ENCODE measurements at regions of chr9 and their contacts with region 1.

Region 1: DNA sequence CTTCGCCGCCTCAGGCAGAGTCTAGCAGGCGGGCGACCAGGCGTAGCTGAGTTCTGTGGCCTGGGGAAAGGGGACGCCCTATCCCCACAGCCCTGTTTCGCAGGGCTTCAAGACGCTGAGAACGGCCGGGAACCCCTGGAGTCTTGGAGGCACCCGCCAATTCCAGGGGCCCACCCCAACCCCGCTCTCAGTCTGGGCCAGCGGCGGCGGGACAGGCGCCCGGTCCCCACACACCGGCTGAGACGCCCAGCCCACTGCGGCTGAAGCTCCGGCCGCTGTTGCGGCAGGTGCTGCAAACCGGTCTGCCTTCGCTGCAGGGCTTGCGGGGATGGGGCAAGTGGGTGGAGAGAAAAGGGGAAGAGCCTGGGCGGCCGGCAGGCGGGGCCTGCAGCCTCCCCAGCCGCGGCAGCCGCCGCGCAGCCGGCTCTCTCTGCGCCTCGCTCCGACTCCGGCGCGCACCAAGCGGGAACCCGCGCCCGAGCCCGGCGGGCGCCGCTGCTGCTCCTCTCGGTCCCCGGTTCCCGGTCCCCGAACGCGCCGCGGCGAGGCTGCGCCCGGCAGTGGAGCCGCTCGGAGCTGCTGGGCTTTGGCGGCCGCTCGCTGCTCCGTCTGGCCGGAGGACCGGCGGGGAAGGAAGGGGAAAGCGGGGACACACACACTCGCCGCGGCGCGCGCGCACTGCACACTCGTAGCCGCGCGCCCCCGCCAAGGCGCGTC is at the start of gene PIP5K1B:
- DNase-seq: peak; percentile 83 to 87
- ATAC-seq: peak; percentile 87
- H3K4me3 ChIP-seq: peak within 1 kb of the TSS; percentile 61 to 81
- H3K27ac ChIP-seq: peak within 1 kb of the TSS in 1 of 2 donors; percentile 35
- H3K4me1 ChIP-seq: no peaks in the 10 kb centered on the region
- H3K27me3 ChIP-seq: no peaks in the 10 kb centered on the region
- total RNA-seq, gene PIP5K1B: 8.2 to 8.8 TPM

Region 2: DNA sequence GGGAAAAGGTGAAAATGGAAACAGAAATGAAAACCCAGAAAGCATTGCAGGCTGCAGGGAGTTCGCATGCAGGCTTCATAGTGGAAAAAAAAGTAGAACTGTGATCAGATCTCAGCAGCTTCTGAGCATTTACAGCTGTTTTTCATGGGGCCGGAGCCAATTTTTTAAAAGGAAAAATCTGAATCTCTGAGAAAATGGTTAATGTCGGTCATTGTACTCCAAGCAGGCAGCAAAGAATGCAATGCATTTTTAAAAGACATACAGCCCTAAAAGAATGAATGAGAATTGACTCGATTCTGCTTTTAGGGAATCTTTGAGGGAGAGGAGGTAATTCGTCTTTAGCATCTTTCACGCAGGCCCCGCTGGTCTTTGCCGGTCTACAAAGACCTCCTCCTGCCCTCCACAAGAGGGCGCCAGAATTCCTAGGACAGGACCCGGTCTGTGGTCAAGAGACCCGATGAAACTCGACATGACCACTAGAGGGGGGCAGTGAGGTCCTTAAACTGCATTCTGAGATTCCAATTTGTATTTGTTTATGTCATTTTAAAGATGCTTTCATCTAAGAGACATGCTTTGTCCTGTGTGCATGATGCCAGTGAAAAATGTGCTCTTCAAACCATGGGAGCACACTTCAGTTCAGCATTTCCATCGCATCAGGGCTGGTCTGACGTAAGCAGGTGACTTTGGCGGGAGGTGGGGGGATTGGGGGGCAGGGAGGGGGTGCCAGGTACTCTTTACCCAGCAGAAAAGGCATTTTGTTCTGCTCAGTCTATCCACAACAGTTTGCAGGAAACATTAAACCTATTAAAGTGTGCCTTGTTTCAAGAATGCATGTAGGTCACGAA is 120.6 kb before region 1 on chr9:
- intact Hi-C with region 1: loop called (anchors 10 kb)
- DNase-seq: peak; percentile 87 to 89
- ATAC-seq: peak; percentile 95
- H3K4me3 ChIP-seq: no peak overlapping the region
- H3K27ac ChIP-seq: no peak overlapping the region
- H3K4me1 ChIP-seq: no peaks in the 10 kb centered on the region
- H3K27me3 ChIP-seq: no peaks in the 10 kb centered on the region

Region 3: GRCh38 chr9:68653141-68653595 is 51.8 kb before region 1 on chr9:
- intact Hi-C with region 1: no loop called
- DNase-seq: no peak
- ATAC-seq: no peak
- H3K4me3 ChIP-seq: no peak overlapping the region
- H3K27ac ChIP-seq: no peak overlapping the region
- H3K4me1 ChIP-seq: no peaks in the 10 kb centered on the region
- H3K27me3 ChIP-seq: no peaks in the 10 kb centered on the region

Region 4: DNA sequence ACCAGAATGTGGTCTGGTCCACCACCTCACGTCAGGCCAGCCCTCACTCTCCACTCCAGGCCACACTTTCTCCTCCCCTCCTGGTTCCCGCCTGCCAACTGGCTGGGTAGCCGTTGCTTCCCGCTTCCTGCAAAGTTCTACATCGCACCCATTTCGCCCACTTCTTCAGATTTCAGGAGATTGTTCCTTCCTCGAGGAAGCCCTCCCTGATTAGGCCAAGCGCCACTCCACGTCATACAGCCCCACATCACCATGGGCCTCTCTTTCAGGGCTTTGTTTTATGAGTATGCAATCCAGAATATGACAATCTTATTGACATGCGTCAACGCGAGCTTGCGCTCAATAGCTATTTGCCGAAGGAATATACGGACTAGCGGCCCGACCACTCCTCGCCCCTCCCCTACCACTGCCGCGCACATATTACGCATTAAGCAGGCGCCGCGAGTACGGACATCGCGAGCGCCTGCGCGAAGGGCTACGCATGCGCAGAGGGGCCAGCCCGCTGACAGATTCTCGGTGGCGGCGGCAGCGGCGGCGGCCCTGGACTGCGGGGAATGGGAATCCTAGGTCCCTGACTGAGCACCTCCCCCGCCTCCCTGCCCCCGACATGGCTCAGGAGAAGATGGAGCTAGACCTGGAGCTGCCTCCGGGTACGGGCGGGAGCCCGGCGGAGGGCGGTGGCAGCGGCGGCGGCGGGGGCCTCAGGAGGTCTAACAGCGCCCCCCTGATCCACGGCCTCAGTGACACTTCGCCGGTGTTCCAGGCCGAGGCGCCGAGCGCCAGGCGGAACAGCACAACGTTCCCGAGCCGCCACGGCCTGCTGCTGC is 74.8 kb after region 1 on chr9:
- intact Hi-C with region 1: loop called in 1 of 2 experiments (anchors 2 kb)
- DNase-seq: peak; percentile 97 to 99
- ATAC-seq: peak; percentile 99
- H3K4me3 ChIP-seq: peak overlapping the region; percentile 73 to 87
- H3K27ac ChIP-seq: peak overlapping the region; percentile 36 to 99
- H3K4me1 ChIP-seq: peaks cover 6 to 12% of the 10 kb centered on the region in 2 donors
- H3K27me3 ChIP-seq: no peaks in the 10 kb centered on the region

Region 5: DNA sequence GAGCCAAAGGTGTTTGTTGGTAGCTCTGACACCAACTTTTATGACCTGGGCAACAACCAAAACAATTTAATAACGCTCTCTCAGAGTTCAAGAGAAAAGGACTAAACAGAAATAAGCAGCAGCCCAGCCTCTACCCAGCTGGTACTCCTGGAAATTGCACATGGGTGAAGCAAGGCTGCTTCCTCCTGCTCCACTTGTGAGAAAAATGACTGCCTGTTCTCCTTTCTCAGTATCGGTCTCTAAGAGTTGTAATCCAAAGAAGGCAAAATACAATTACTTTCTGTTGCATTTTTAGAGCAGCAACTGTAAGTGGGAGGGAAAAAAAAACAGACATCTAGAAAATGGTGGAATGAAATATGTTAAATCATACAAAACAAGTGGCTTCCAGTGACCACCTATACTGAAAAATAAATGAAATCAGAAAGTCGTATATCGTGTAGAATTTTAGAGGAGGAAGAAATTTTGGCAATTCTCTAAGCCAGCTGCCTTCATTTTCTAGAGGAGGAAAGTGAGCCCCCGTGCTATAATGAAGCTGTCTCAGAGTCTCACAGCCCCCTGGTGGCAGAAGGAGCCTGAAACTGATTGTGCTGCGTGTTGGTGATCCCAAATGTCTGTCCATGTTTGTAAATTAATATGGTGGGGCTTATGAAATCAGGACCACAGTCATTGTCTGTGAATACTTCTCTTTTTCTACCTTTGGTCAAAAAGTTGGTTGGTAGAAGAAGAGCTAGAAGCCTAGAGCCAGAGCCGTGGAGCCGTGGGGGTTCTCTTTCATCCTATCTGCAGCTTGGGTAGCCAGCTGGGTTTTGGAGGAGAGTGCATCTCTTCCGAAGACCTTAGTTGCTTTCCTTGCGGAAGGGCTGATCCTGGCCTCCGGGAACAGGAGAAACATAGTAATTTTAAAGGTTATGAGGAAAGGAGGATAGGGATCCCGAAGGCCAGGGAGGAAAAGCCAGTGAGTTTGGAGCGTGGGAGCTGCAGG is 139.9 kb after region 1 on chr9:
- intact Hi-C with region 1: loop called (anchors 5 to 10 kb)
- DNase-seq: peak; percentile 62 to 81
- ATAC-seq: peak; percentile 58
- H3K4me3 ChIP-seq: no peak overlapping the region
- H3K27ac ChIP-seq: no peak overlapping the region
- H3K4me1 ChIP-seq: no peaks in the 10 kb centered on the region
- H3K27me3 ChIP-seq: no peaks in the 10 kb centered on the region

Region 6: DNA sequence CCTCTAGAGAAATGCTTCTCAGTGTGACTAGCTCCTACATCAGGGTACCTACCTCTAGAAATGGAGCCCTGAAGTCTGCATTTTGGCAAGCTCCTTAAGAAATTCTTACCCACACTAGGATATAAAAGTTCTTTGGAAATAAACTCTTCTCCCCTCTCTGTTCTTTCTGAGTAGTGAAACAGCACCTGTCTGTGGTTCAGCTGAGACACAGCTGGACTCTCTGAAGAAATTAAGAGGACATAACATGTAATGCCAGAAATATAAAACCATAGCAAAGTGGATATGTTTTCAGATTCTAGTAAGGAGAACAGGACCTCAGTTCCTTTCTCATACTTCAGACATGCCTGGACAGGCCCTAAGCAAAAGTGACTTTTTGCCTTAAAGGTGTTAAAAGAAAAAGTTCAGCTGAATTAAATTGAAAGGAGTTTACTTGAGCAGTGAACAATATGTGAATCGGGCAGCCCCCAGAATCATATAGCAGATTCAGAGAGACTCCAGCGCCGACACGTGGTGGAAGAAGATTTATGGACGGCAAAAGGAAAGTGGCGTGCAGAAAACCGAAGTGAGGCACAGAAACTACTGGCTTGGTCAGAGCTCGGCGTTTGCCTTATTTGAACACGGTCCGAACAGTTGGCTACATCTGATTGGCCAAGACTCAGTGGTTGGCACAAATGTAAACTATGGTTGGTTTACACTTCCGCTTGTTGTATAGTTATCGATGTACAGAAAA is 244.5 kb after region 1 on chr9:
- intact Hi-C with region 1: loop called (anchors 5 to 10 kb)
- DNase-seq: peak; percentile 57 to 78
- ATAC-seq: peak; percentile 63
- H3K4me3 ChIP-seq: no peak overlapping the region
- H3K27ac ChIP-seq: no peak overlapping the region
- H3K4me1 ChIP-seq: no peaks in the 10 kb centered on the region
- H3K27me3 ChIP-seq: peaks cover 0 to 1% of the 10 kb centered on the region in 2 donors